ENCODE measurements at regions of chr16 and their contacts with region 1.

Region 1: DNA sequence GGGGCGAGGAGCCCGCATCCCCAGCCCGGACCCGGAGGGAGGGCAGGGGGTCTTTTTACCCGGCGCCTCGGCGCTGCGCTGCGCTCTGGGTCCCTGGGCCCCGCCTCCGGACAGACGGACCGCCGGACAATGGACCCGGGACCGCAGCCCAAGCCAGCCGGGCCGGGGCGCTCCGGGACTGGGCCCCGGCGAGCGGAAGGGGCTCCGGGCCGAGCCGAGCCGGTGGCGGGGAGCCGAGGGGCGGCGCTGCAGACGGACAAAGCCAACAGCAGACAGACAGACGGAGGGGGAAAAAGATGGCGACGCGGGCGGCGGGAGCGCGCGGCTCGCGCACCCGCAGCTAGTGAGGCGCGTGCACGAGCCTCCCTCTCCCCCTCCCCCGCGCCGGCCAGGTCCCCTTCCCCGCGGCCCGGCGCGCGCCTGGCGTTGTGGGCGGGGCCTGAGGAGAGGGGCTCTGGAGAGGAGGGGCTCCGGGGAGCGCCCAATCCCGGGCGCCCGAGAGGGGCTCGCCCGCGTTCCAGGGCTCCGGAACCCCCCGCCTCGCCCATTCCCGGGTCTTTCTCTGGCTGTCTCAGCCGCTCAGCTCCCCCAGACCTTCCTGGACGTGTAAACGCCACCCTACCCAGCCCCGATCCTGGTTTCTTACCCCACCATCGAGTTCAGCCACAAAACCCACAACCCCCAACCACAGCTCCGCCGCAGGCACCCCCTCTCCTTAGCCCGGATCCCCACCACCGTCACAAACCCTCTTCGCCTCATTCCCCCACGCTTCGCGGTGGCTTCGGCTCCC is at the start of gene ZNF821:
- DNase-seq: peak; percentile 79
- ATAC-seq: peak; percentile 67
- H3K4me3 Mint-ChIP-seq: peak within 1 kb of the TSS; percentile 89
- H3K27ac Mint-ChIP-seq: peak within 1 kb of the TSS; percentile 92
- H3K4me1 Mint-ChIP-seq: peaks cover 41% of the 10 kb centered on the region
- H3K27me3 Mint-ChIP-seq: peaks cover 10% of the 10 kb centered on the region
- total RNA-seq, gene ZNF821: 9.0 to 10.7 TPM

Region 2: DNA sequence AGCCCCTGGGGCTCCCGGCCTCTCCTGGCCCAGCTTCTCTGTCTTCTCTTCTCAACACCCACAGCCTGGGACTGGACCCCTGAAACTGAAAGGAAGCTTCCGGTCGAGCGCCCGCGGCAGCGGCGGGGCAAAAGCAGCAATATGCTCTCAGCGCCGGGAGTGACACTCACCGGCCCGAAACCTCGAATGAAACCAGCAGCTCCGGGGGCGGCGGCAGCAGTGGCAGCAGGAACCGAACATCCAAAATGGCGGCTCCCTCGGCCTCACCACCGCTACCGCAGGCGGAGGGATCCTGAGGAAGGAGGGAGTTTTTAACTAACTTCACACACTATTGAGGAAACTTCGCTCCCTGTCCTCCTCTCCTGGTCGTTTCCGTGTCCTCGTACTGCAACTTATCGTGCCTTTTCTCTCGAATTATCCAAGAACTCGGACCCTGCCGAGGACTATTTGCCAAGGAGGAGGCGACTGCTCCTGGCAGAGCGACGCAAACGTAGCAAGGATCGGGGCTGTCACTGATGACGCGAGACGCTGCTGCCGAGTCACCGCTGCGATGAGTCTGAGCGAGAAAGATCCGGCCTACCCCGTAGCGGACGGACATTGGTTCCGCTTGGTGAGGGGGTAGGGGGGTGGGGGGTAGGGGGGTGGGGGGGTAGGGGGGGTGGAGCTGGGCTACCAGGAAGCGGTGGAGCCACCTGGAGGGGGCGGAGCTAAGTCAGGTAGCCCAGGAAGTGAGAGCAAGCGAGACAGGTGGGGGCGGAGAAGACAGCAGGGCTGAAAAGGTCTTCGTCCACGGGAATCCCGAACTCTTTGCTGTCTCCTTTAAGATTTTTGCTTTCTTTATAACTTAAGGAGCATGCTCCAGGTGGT is 75.2 kb before region 1 on chr16 and contains the start of gene AP1G1:
- CTCF ChIA-PET with region 1: interaction called, 36 read pairs
- DNase-seq: peak; percentile 97
- ATAC-seq: peak; percentile 96
- H3K4me3 Mint-ChIP-seq: peak within 1 kb of the TSS; percentile 91
- H3K27ac Mint-ChIP-seq: peak within 1 kb of the TSS; percentile 100
- H3K4me1 Mint-ChIP-seq: peaks cover 34% of the 10 kb centered on the region
- H3K27me3 Mint-ChIP-seq: no peaks in the 10 kb centered on the region
- total RNA-seq, gene AP1G1: 87.2 to 88.6 TPM

Region 3: DNA sequence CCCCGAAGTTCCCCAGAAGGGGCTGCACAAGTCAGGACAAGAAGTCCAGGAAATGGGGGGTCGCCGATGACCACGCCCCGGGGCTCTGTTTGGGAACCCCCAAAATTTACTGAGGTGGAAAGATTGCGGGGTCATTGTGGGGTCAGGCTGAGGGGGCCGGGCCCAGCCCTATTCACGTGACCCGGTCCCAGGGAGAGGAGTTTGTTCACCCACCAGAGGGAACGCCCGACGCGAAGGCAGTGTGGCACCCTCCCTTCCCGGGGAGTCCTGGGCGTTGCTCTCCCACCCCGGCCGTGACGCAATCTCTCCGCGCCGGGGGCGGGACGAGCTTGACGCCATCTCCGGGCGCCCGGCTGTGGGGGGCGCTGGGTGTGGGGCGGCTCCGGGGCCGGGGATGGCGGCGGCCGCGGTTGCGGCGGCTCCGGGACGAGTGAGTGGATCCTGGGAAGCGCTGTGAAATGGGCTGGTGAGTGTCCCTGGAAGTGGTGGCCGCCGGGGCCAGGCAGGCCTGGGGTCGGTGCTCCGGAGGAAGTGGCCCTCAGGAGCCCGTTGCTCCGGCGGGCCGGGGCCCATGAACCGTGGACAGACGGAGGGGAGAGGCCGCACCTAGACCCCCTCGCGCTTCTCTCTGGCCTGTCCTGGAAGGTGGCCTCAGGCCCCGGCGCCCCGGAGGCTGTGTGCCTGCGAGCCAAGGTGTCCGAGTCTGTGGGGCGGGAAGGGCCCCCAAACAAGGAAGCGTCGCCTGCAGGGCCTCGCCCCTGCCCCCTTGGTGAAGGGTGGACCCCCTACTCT is 38.2 kb before region 1 on chr16 and contains the start of gene ATXN1L:
- CTCF ChIA-PET with region 1: interaction called, 29 read pairs
- DNase-seq: peak; percentile 95
- ATAC-seq: peak; percentile 94
- H3K4me3 Mint-ChIP-seq: peak within 1 kb of the TSS; percentile 86
- H3K27ac Mint-ChIP-seq: peak within 1 kb of the TSS; percentile 95
- H3K4me1 Mint-ChIP-seq: peaks cover 55% of the 10 kb centered on the region
- H3K27me3 Mint-ChIP-seq: no peaks in the 10 kb centered on the region
- total RNA-seq, gene ATXN1L: 23.7 to 24.1 TPM

Region 4: GRCh38 chr16:71867939-71868338 is 16.1 kb before region 1 on chr16:
- CTCF ChIA-PET with region 1: interaction called, 33 read pairs
- DNase-seq: no peak
- ATAC-seq: no peak
- H3K4me3 Mint-ChIP-seq: no peak overlapping the region
- H3K27ac Mint-ChIP-seq: no peak overlapping the region
- H3K4me1 Mint-ChIP-seq: peaks cover 34% of the 10 kb centered on the region
- H3K27me3 Mint-ChIP-seq: no peaks in the 10 kb centered on the region

Region 5: GRCh38 chr16:71961066-71962039 is 77.3 kb after region 1 on chr16:
- CTCF ChIA-PET with region 1: interaction called, 35 read pairs
- DNase-seq: peak; percentile 88
- ATAC-seq: peak; percentile 93
- H3K4me3 Mint-ChIP-seq: no peak overlapping the region
- H3K27ac Mint-ChIP-seq: no peak overlapping the region
- H3K4me1 Mint-ChIP-seq: peaks cover 17% of the 10 kb centered on the region
- H3K27me3 Mint-ChIP-seq: peaks cover 15% of the 10 kb centered on the region

Measured in activated CD8-positive, alpha-beta memory T cell treated with anti-CD3 and anti-CD28 coated beads, Interleukin-2, amount 10 ng/mL, durations not matched to agents 7 days and 5 days (primary cell).